Activated B cell treated with CpG ODN at 0.5 μM for 24 hours (primary cell): ENCODE measurements at regions of chr19 and their contacts with region 1.

Region 1: DNA sequence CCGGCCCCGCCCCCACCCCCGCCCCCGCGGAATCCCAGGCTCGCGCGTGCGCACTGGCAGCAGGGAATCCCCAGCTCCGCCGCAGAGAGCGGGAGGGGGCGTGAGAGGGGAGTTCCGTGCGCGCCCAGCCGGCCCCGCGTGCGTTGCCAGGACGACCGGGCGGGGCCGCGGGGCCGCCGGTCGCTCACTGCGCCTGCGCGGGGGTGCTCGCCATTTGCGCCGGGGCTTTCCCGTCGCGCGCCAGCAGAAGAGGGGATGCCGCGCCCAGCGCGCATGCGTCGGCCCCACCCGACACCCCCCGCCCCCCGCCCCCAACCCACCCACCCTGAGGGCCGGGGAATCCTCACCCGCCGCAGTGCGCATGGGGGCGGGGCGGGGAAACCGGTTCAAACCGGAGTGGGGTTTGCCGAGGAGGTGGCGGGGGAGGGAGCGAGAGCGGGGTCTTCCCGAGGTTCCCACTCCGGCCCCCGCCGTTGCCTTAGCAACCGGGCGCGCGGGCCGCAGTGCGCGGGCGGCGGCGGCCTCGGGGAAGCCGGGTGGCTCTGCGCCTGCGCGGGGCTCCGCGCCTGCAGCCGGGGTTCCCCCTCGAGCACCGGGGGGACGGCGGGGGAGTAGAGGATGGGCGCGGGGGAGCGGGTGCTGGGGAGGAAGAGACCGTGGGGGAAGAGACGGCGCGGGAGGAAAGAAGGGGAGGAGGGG is 15.1 kb downstream of the CCDC124 start:
- DNase-seq: peak; percentile 98
- ATAC-seq: peak; percentile 63
- H3K4me3 Mint-ChIP-seq: peak overlapping the region; percentile 74
- H3K27ac Mint-ChIP-seq: no peak overlapping the region
- H3K4me1 Mint-ChIP-seq: peaks cover 59% of the 10 kb centered on the region
- H3K27me3 Mint-ChIP-seq: peaks cover 12% of the 10 kb centered on the region
- CTCF ChIP-seq: no peak

Region 2: GRCh38 chr19:17977021-17977420 is 29.1 kb after region 1 on chr19:
- CTCF ChIA-PET with region 1: no interaction called
- POLR2A ChIA-PET with region 1: interaction called, 4 read pairs
- intact Hi-C with region 1: loop called (anchors 1 kb)
- DNase-seq: no peak
- ATAC-seq: no peak
- H3K4me3 Mint-ChIP-seq: no peak overlapping the region
- H3K27ac Mint-ChIP-seq: no peak overlapping the region
- H3K4me1 Mint-ChIP-seq: peaks cover 18% of the 10 kb centered on the region
- H3K27me3 Mint-ChIP-seq: no peaks in the 10 kb centered on the region
- CTCF ChIP-seq: no peak

Region 3: DNA sequence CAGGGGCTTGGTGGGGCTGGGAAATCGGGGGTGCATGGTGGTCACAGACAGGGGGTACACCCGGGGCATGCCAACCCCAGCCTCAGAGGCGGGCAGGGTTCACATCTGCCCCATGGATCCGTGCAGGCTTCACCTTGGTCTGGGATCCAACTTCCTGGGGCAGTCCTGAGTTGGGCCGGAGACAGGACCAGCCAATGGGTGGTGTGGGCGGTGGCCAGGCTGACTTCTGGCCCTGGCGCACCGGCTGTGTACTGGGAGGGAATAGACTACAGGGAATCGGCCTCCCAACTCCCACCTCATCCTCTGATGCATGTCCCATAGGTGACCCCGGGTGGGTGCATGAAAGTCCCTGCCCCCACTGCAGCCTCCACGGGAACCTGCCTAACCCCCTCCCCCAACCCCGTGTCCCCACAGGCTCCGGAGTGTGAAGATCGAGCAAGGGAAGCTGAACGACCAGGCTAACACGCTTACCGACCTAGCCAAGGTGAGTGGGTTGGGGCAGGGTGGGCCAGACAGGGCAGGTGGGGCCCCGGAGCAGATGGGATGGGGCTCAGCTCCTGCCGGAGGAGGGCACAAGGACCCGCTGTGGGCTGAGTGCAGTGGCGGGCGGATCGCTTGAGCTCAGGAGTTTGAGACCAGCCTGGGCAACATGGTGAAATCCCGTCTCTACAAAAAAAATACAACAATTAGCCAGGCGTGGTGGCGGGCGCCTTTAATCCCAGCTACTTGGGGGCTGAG is 45.3 kb after region 1 on chr19:
- CTCF ChIA-PET with region 1: interaction called, 227 read pairs
- POLR2A ChIA-PET with region 1: interaction called, 5 read pairs
- intact Hi-C with region 1: loop called (anchors 1 kb)
- DNase-seq: no peak
- ATAC-seq: no peak
- H3K4me3 Mint-ChIP-seq: no peak overlapping the region
- H3K27ac Mint-ChIP-seq: no peak overlapping the region
- H3K4me1 Mint-ChIP-seq: peaks cover 7% of the 10 kb centered on the region
- H3K27me3 Mint-ChIP-seq: no peaks in the 10 kb centered on the region
- CTCF ChIP-seq: no peak